ENCODE measurements at regions of chr11 and their contacts with region 1.

Region 1: DNA sequence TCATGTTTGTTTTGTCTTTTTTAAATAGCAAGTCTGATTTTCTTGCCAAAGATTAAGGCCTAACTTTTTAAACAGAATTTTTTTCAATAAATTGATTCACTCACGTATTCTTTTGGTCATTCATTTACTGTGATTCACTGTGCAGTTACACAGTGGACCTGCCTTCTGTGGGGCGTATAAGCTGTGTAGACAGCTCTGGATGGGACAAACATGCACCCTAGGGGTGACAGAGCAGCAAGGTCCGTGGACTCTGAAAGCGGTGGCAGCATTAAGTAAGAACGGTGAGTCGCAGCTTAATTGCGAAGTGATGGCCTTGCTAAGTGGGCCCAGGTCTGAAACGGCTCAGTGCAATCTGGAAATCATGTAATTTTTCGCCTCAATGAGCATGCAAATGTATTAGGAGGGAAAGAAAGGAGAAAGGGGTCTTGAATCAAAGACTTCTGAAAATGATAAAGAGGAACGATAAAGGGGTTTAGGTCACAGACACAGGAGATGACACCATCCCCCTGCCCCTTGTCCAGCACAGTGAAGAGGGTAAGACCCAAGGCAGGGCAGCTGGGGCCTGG is 113.1 kb downstream of the SPATA19 start:
- DNase-seq: no peak
- H3K4me3 ChIP-seq: no peak overlapping the region
- H3K27ac ChIP-seq: no peak overlapping the region
- H3K4me1 ChIP-seq: no peaks in the 10 kb centered on the region
- H3K27me3 ChIP-seq: no peaks in the 10 kb centered on the region
- CTCF ChIP-seq: no peak
- POLR2A ChIP-seq: no peak

Region 2: DNA sequence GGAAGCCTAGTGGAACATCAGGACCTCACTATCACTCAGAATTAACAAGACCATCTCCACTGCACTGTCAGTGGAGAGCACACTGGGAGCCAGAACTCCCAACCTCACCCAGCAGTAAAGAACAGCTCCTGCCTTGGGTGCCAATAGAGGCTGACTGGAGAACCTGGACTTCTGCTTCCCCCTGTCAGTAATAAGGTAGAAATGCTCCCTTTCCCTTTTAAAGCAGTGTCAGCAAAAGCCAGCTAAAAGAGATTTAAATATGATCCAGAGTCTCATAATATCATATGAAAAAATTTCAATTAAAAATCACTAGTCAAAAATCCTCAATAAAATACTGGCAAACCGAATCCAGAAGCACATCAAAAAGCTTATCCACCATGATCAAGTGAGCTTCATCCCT is 30.3 kb after region 1 on chr11:
- intact Hi-C with region 1: loop called (anchors 2 kb)
- DNase-seq: no peak
- H3K4me3 ChIP-seq: no peak overlapping the region
- H3K27ac ChIP-seq: no peak overlapping the region
- H3K4me1 ChIP-seq: no peaks in the 10 kb centered on the region
- H3K27me3 ChIP-seq: no peaks in the 10 kb centered on the region
- CTCF ChIP-seq: no peak
- POLR2A ChIP-seq: no peak